SK-N-SH (cell line): ENCODE measurements at regions of chr19 and their contacts with region 1.

Region 1: DNA sequence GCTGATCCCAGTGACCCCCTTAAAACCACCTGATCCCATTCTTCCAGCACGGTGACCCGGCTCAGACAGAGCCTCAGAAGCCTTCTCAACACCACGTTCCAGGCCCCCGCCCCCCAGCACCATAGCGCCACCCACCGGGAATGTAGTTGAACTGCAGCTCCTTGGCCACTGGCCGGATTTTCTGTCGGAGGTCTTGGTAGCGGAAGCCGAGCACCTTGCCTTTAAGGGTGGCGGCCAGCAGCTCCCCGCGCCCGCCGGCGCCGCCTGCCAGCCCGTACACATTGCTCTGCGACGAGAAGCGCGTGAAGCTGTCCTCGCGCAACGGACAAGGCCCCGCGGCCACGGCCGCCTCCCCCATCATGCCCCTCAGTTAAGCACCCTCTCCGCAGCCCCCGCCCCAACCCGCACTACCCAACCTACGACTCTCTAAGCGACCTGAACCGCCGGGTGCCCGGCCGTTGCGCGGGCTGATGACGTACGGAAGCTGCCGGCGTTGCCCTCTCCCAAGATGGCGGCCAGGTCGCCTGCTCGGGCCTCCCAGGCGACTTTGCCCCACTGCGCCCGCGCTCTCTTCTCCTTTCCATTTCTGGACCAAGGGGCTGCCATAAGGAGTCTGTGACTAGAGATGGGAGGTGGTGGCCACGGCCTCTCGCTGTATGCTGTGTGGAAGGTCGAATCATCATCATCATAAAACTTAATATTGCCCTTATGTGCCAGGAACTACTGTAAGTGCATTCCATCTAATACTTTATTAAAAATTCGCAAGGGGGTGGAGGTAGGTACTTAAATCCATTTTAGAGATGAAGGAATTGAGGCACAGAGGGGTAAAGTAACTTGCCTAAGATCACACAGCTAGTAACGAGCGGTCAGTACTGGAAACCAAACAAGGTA is at the start of gene KPTN:
- DNase-seq: peak; percentile 98
- H3K4me3 ChIP-seq: peak within 1 kb of the TSS; percentile 61 to 76
- H3K27ac ChIP-seq: peak within 1 kb of the TSS; percentile 81 to 89
- H3K4me1 ChIP-seq: peaks cover 0 to 12% of the 10 kb centered on the region in 2 experiments; a peak in 1 of 4 replicates
- H3K27me3 ChIP-seq: no peaks in the 10 kb centered on the region
- CTCF ChIP-seq: peak; percentile 98
- EP300 ChIP-seq: no peak
- RAD21 ChIP-seq: peak; percentile 69
- polyA plus RNA-seq, gene KPTN: 15.8 and 17.7 TPM in 2 replicates

Region 2: DNA sequence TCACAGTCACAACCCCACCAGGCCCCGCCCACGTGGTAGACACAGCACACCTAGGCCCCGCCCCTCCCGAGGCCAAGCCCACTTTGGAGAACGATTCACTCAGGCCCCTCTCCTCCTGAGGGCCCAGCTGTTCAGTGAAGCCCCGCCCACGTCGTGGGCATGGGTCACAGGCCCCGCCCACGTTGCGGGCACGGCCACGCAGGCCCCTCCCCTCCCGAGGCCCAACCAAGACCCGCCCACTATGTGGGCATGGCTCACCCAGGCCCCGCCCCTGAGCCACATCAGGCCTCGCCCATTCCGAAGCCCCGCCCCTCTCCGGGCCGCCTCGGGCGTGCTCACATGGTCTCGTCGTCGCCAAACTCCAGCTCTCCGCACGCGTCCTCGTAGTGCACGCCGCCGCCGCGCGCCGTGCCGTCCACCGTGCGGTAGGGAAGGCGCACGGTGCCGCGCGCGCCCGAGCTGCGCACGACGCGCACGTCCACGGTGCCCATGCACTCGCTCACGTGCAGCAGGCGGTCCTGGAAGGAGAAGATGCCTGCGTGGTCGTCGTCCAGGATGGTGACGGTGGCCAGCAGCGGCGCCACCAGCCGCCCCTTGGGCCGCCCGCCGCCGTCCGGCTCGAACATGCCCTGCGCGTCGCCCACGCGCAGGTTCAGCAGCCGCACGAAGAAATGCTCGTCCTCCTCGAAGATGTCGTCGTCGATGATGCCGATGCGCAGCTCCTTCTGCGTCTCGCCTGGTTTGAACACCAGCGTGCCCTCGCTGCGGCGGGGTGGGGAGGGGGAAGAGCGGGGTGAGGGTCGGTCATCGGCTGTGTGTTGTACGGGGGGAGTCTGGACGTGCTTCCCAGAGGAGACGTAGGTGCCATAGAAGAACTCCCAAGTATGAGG is 36.3 kb before region 1 on chr19:
- CTCF ChIA-PET with region 1: interaction called, 32 read pairs
- POLR2A ChIA-PET with region 1: interaction called, 10 read pairs
- DNase-seq: peak; percentile 97
- H3K4me3 ChIP-seq: peak overlapping the region; percentile 41 to 46; a peak in 3 of 4 replicates
- H3K27ac ChIP-seq: peak overlapping the region in 1 of 2 experiments; percentile 67; a peak in 1 of 4 replicates
- H3K4me1 ChIP-seq: peaks cover 0 to 9% of the 10 kb centered on the region in 2 experiments; a peak in 2 of 4 replicates
- H3K27me3 ChIP-seq: no peaks in the 10 kb centered on the region; the same call in 1 of the 2 replicates
- CTCF ChIP-seq: no peak
- EP300 ChIP-seq: no peak
- RAD21 ChIP-seq: no peak

Region 3: GRCh38 chr19:47471733-47472457 is 12.2 kb before region 1 on chr19 and contains the start of gene SLC8A2:
- CTCF ChIA-PET with region 1: interaction called, 47 read pairs
- POLR2A ChIA-PET with region 1: interaction called, 8 read pairs
- DNase-seq: peak; percentile 99
- H3K4me3 ChIP-seq: peak within 1 kb of the TSS; percentile 37 to 49; a peak in 3 of 4 replicates
- H3K27ac ChIP-seq: peak within 1 kb of the TSS in 1 of 2 experiments; percentile 48; a peak in 1 of 4 replicates
- H3K4me1 ChIP-seq: peaks cover 0 to 18% of the 10 kb centered on the region in 2 experiments; a peak in 1 of 4 replicates
- H3K27me3 ChIP-seq: peaks cover 6% of the 10 kb centered on the region; the same call in 1 of the 2 replicates
- CTCF ChIP-seq: no peak
- EP300 ChIP-seq: no peak
- RAD21 ChIP-seq: no peak
- polyA plus RNA-seq, gene SLC8A2: 0.29 and 0.58 TPM in 2 replicates

Region 4: DNA sequence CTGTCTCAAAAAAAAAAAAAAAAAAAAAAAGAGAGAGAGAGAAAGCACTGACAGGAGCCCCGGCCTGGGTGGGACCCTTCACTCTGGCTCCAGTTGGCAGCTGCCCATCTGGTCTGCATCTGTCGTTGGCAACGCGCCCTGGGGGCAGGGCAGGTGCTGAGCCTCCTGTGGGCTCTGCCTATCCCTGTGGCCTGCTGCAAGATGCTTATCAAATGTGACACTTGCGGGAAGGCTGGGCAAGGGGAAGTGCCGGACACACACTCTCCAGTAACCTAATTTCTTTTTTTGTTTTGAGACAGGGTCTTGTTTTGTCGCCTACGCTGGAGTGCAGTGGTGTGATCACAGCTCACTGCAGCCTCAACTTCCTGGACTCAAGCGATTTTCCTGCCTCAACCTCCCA is 10.7 kb after region 1 on chr19:
- CTCF ChIA-PET with region 1: interaction called, 52 read pairs
- POLR2A ChIA-PET with region 1: interaction called, 17 read pairs
- DNase-seq: peak; percentile 98
- H3K4me3 ChIP-seq: no peak overlapping the region
- H3K27ac ChIP-seq: peak overlapping the region in 1 of 2 experiments; percentile 84; a peak in 2 of 4 replicates
- H3K4me1 ChIP-seq: peaks cover 0 to 82% of the 10 kb centered on the region in 2 experiments; a peak in 1 of 4 replicates
- H3K27me3 ChIP-seq: no peaks in the 10 kb centered on the region
- CTCF ChIP-seq: no peak
- EP300 ChIP-seq: peak in 1 of 2 experiments; percentile 65; a peak in 1 of 4 replicates
- RAD21 ChIP-seq: no peak

Region 5: GRCh38 chr19:47499863-47500830 is 16.1 kb after region 1 on chr19:
- CTCF ChIA-PET with region 1: interaction called, 52 read pairs
- POLR2A ChIA-PET with region 1: interaction called, 14 read pairs
- DNase-seq: no peak
- H3K4me3 ChIP-seq: no peak overlapping the region
- H3K27ac ChIP-seq: peak overlapping the region in 1 of 2 experiments; percentile 84; a peak in 1 of 4 replicates
- H3K4me1 ChIP-seq: peaks cover 0 to 46% of the 10 kb centered on the region in 2 experiments; a peak in 1 of 4 replicates
- H3K27me3 ChIP-seq: no peaks in the 10 kb centered on the region
- CTCF ChIP-seq: no peak
- EP300 ChIP-seq: no peak
- RAD21 ChIP-seq: no peak

Region 6: GRCh38 chr19:47514869-47515588 is 31.0 kb after region 1 on chr19 and contains the start of gene NAPA:
- CTCF ChIA-PET with region 1: interaction called, 24 read pairs
- POLR2A ChIA-PET with region 1: interaction called, 11 read pairs
- DNase-seq: peak; percentile 99
- H3K4me3 ChIP-seq: peak within 1 kb of the TSS; percentile 91 to 97
- H3K27ac ChIP-seq: peak within 1 kb of the TSS; percentile 81 to 88
- H3K4me1 ChIP-seq: peaks cover 15 to 16% of the 10 kb centered on the region in 2 experiments; a peak in 3 of 4 replicates
- H3K27me3 ChIP-seq: no peaks in the 10 kb centered on the region
- CTCF ChIP-seq: no peak
- EP300 ChIP-seq: peak in 1 of 2 experiments; percentile 60; a peak in 1 of 4 replicates
- RAD21 ChIP-seq: peak; percentile 81
- polyA plus RNA-seq, gene NAPA: 80.0 and 84.1 TPM in 2 replicates

Region 7: DNA sequence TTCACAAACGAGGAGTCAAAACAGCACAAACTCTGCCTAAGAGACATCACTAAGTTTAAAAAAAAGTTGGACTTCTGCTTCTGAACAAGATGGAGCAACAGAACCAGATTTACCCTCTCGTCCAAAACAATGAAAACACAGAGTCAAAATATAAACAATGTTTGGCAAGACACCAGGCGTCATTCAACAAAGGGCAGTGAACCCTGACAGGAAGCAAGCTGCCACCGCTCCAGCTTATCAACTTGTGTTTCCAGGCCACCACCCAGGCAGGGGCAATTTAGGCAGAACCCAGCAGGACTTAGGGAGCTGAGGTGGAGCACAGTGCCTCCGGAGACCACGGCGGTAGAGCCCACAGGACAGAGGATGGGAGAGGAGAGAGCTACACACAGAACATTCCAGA is 39.4 kb after region 1 on chr19:
- CTCF ChIA-PET with region 1: interaction called, 10 read pairs
- POLR2A ChIA-PET with region 1: no interaction called
- DNase-seq: no peak
- H3K4me3 ChIP-seq: no peak overlapping the region
- H3K27ac ChIP-seq: no peak overlapping the region
- H3K4me1 ChIP-seq: no peaks in the 10 kb centered on the region; a peak in 1 of 4 replicates
- H3K27me3 ChIP-seq: no peaks in the 10 kb centered on the region
- CTCF ChIP-seq: no peak
- EP300 ChIP-seq: no peak
- RAD21 ChIP-seq: no peak